ENCODE measurements at regions of chr1 and their contacts with region 1.

Region 1: DNA sequence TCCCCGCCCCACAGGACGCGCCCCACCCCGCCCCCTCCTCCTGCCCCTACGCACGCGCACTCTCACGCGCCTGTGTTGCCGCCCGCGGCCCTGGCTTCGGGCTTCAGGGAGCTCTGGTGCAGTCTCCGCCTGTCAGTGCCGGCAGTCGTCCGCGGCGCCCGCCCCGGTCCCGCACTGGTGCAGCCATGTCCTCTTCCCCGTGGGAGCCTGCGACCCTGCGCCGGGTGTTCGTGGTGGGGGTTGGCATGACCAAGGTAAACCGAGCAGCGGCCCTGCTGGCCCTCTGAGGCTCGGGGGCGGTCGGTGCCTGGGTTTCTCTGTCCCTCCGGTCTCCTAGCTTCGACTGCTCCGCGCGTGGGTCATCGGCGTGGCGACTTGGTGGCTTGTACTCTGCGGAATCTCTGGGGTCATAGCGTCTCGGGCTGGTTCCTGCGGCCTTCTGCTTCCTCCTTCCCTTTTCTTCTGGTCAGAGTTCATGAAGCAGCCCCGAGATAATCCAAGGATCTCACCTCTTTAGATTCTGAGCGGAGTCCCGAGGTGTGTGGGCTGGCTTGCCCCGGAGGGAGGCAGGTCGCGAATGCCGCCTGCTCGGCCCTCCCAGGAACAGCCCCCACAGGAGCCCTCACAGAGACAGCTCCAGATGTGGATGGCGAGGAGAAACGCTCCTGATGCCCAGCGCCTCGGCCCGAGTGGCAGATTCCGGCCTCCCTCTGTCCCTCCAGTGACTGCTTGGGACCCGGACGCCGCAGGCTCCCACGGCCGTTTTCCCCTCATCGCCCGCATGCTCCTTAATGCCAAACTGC is at the start of gene SCP2:
- DNase-seq: peak; percentile 82
- ATAC-seq: peak; percentile 96
- H3K4me3 Mint-ChIP-seq: peak within 1 kb of the TSS; percentile 79
- H3K27ac Mint-ChIP-seq: peak within 1 kb of the TSS; percentile 60
- H3K4me1 Mint-ChIP-seq: peaks cover 18% of the 10 kb centered on the region
- H3K27me3 Mint-ChIP-seq: no peaks in the 10 kb centered on the region
- total RNA-seq, gene SCP2: 87.2 to 95.9 TPM

Region 2: GRCh38 chr1:52842643-52843309 is 84.6 kb before region 1 on chr1 and contains the start of gene ZYG11A:
- CTCF ChIA-PET with region 1: interaction called, 12 read pairs
- POLR2A ChIA-PET with region 1: no interaction called
- DNase-seq: peak; percentile 84
- ATAC-seq: peak; percentile 99
- H3K4me3 Mint-ChIP-seq: peak within 1 kb of the TSS; percentile 62
- H3K27ac Mint-ChIP-seq: no peak within 1 kb of the TSS
- H3K4me1 Mint-ChIP-seq: peaks cover 2% of the 10 kb centered on the region
- H3K27me3 Mint-ChIP-seq: peaks cover 21% of the 10 kb centered on the region
- total RNA-seq, gene ZYG11A: 0.13 to 0.16 TPM

Region 3: GRCh38 chr1:52967666-52968065 is 40.3 kb after region 1 on chr1:
- CTCF ChIA-PET with region 1: no interaction called
- POLR2A ChIA-PET with region 1: no interaction called
- DNase-seq: no peak
- ATAC-seq: no peak
- H3K4me3 Mint-ChIP-seq: no peak overlapping the region
- H3K27ac Mint-ChIP-seq: no peak overlapping the region
- H3K4me1 Mint-ChIP-seq: no peaks in the 10 kb centered on the region
- H3K27me3 Mint-ChIP-seq: no peaks in the 10 kb centered on the region

Region 4: DNA sequence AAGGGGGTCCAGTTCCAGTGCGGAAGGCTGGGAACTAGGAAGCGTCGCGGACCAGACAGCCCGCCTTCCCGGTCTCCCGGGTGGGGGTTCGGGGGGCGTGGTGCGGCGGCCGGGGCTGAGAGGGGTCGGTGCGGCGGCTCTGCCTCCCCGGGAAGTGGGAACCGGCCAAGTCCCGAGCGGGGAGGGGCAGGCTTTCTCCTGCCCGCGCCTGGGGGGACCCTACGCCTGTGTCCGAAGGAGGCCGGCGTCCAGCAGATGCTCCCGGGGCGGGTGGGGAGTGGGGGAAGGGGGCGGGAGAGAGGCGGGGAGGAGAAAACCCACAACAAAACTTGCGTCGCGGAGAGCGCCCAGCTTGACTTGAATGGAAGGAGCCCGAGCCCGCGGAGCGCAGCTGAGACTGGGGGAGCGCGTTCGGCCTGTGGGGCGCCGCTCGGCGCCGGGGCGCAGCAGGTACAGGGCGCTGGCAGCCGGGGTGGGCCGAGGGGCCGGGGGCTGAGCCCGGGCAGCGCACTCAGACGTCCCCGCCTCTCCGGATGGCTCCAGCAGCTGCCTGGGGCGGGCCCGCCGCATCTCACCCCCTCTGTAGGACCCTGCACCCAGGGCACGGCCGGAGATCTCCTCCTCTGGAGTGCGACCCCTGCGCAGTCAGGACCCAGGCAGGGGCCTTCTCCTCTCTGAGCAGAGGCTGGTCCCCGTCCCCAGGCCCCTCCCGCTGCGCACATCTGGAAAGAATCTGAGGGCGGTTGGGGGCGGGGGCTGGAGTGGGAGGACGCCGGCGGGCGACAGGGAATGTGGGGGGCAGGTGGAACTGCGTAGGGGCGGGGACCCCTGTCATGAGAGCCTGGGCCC is 134.7 kb after region 1 on chr1 and contains the start of gene PODN:
- CTCF ChIA-PET with region 1: no interaction called
- POLR2A ChIA-PET with region 1: no interaction called
- DNase-seq: no peak
- ATAC-seq: peak; percentile 62
- H3K4me3 Mint-ChIP-seq: no peak within 1 kb of the TSS
- H3K27ac Mint-ChIP-seq: no peak within 1 kb of the TSS
- H3K4me1 Mint-ChIP-seq: peaks cover 2% of the 10 kb centered on the region
- H3K27me3 Mint-ChIP-seq: peaks cover 56% of the 10 kb centered on the region
- total RNA-seq, gene PODN: not detected